Spleen (tissue), 13 donors: ENCODE measurements at regions of chr3 and their contacts with region 1.

Region 1: GRCh38 chr3:177050501-177051237 is 146.6 kb downstream of the TBL1XR1 start:
- DNase-seq: no peak
- H3K4me3 ChIP-seq: no peak overlapping the region
- H3K27ac ChIP-seq: peak overlapping the region in 2 of 8 donors; percentile 7 to 12
- H3K4me1 ChIP-seq: peaks cover 0 to 34% (median 14%) of the 10 kb centered on the region in 6 donors
- H3K27me3 ChIP-seq: no peaks in the 10 kb centered on the region
- CTCF ChIP-seq: peak in 10 of 11 experiments; percentile 28 to 71 (median 59)
- POLR2A ChIP-seq: no peak

Region 2: DNA sequence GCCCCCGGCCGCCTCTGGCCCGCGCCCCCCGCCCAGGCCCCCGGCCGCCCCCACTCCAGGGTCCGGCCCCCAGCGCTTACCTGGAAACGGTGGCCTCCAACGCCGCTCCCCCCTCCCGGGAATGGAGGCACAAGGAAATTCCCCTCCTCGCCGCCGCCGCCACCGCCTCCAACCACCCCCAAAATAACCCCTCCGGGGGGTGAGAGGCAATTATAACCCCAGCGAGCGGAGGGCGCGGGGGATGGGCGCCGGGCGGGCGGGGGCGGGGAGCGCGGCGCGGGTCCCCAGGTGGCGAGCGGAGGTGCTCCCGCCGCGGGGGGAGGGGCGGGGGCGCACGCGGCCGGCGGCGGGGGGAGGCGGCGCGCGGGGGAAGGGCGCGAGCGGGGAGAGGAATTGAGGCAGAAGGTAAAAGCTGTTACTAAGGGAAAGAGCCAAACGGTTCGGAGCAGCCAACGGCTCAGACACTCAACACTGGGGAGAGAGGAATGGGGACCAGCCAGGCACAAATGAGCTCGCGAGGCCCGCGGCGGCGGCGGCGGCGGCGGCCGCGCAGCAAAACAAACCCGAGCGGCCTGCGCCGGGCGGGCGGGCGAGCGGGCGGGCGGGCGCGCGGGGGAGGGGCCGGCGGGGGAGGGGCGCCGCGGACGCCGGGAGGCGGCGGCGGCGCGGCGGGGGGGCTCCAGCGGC is 146.5 kb after region 1 on chr3 and contains the start of gene TBL1XR1:
- intact Hi-C with region 1: loop called (anchors 10 kb)
- DNase-seq: peak; percentile 96
- H3K4me3 ChIP-seq: peak within 1 kb of the TSS; percentile 51 to 93 (median 80)
- H3K27ac ChIP-seq: peak within 1 kb of the TSS; percentile 92 to 100 (median 97)
- H3K4me1 ChIP-seq: peaks cover 30 to 81% (median 60%) of the 10 kb centered on the region in 6 donors
- H3K27me3 ChIP-seq: no peaks in the 10 kb centered on the region
- CTCF ChIP-seq: no peak
- POLR2A ChIP-seq: peak in 1 of 3 donors; percentile 10
- total RNA-seq, gene TBL1XR1: 78.0 to 168 (median 153) TPM

Region 3: GRCh38 chr3:177359593-177360357 is 309.1 kb after region 1 on chr3:
- intact Hi-C with region 1: loop called (anchors 10 kb)
- DNase-seq: peak; percentile 99
- H3K4me3 ChIP-seq: peak overlapping the region; percentile 28 to 72 (median 35)
- H3K27ac ChIP-seq: peak overlapping the region; percentile 77 to 97 (median 94)
- H3K4me1 ChIP-seq: peaks cover 30 to 65% (median 49%) of the 10 kb centered on the region in 6 donors
- H3K27me3 ChIP-seq: no peaks in the 10 kb centered on the region
- CTCF ChIP-seq: peak in 4 of 11 experiments; percentile 6 to 21 (median 9)
- POLR2A ChIP-seq: peak in 2 of 3 donors; percentile 66 to 68

Region 4: DNA sequence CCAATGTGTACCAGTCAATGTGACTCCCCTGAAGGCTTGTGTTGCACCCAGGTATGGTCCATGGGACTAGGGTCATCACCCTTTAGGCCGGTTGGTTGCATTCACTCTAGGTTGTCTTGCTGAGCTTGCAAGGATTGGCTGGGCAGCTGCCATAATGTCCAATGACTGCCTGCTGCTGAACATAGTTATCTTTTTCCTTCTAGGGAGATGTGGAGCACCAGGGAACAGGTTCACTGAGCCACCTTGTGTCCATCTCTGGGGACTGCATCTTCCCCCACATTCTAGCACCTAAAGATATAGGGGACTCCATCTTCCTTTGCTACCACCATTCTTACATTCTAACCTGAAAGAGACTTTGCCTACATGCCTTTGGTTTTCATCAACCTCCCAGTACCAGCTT is 727.0 kb after region 1 on chr3:
- intact Hi-C with region 1: loop called (anchors 10 kb)
- DNase-seq: peak; percentile 73
- H3K4me3 ChIP-seq: no peak overlapping the region
- H3K27ac ChIP-seq: peak overlapping the region in 1 of 8 donors; percentile 57
- H3K4me1 ChIP-seq: peaks cover 14 to 57% (median 35%) of the 10 kb centered on the region in 6 donors
- H3K27me3 ChIP-seq: no peaks in the 10 kb centered on the region
- CTCF ChIP-seq: peak; percentile 11 to 71 (median 58)
- POLR2A ChIP-seq: no peak

Region 5: DNA sequence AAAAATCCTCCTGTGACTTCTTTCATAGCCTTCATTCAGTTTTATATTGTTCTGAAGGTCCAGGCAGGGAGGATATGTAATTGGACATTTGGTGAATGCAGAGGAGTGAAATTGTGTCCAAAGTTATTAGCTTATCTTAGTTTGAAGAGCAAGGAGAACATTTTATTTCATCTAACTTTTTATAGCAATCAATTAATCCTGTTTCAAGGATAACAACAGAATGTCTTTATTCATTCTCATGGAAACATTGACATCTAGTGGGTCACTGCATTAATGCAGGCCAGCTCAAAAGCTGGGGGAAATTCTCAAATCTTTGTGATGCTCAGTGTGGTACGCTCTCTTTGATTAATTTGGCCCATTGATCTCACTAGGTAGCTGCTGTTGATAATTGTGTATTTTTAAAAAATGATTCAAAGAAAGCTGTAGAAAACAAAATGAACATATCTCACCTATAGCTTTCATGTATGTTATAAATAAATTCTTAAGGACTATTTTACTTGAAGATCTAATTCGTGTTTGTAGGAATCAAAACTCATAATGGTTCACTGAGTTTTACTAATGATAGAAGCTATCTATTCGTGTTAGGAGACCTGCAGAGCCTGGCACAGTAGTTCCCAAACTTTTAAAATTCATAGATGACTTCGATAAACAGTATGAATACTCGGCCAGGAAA is 1334.7 kb after region 1 on chr3:
- intact Hi-C with region 1: loop called (anchors 10 kb)
- DNase-seq: no peak
- H3K4me3 ChIP-seq: no peak overlapping the region
- H3K27ac ChIP-seq: peak overlapping the region in 1 of 8 donors; percentile 32
- H3K4me1 ChIP-seq: peaks cover 0 to 5% (median 0%) of the 10 kb centered on the region in 6 donors
- H3K27me3 ChIP-seq: no peaks in the 10 kb centered on the region
- CTCF ChIP-seq: peak; percentile 55 to 83 (median 76)
- POLR2A ChIP-seq: no peak